Tibial artery (tissue), 4 donors: ENCODE measurements at regions of chr1 and their contacts with region 1.

Region 1: GRCh38 chr1:39317910-39318633 is 113.6 kb downstream of the MACF1 start:
- DNase-seq: no peak
- H3K4me3 ChIP-seq: no peak overlapping the region
- H3K27ac ChIP-seq: no peak overlapping the region
- H3K4me1 ChIP-seq: no peaks in the 10 kb centered on the region
- H3K27me3 ChIP-seq: no peaks in the 10 kb centered on the region
- CTCF ChIP-seq: no peak

Region 2: GRCh38 chr1:39081266-39082009 is 236.6 kb before region 1 on chr1:
- intact Hi-C with region 1: no loop called
- DNase-seq: no peak
- H3K4me3 ChIP-seq: peak overlapping the region; percentile 52 to 63
- H3K27ac ChIP-seq: peak overlapping the region in 1 of 2 donors; percentile 27
- H3K4me1 ChIP-seq: peaks cover 0 to 34% (median 25%) of the 10 kb centered on the region in 4 donors
- H3K27me3 ChIP-seq: peaks cover 0 to 12% of the 10 kb centered on the region in 2 donors
- CTCF ChIP-seq: peak in 1 of 2 experiments; percentile 5

Region 3: GRCh38 chr1:39258146-39258924 is 59.7 kb before region 1 on chr1:
- intact Hi-C with region 1: no loop called
- DNase-seq: peak; percentile 76 to 78
- H3K4me3 ChIP-seq: no peak overlapping the region
- H3K27ac ChIP-seq: peak overlapping the region; percentile 53 to 56
- H3K4me1 ChIP-seq: peaks cover 0 to 65% (median 14%) of the 10 kb centered on the region in 4 donors
- H3K27me3 ChIP-seq: no peaks in the 10 kb centered on the region
- CTCF ChIP-seq: peak; percentile 83 to 91

Region 4: DNA sequence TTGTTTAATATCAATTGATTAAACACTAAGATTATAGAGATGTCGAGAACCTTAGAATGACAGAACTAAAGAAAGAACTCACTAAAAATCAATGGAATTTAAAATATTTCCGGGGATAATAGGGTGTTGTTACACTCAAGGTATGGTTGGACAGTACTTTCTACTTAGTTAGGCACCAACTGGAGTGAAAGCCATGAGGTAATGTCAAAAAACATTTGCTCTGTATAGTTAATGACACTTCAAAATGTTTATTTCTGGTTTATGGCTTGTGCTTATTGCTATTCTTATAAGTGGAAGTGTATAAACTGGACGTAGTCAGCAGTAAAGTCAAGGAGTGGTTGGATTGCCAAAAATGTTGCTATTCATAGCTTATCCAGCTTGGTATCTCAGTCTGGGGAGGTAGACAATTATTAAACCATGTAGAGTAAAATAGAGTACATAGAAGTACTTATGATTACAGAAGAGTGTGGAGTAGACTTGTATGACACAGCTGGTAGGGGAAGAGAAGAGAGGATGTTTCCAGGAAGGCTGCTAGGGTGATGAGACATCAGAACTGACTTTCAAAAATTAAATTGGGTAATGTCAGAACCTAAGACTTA is 116.8 kb after region 1 on chr1:
- intact Hi-C with region 1: loop called (anchors 10 kb)
- DNase-seq: no peak
- H3K4me3 ChIP-seq: no peak overlapping the region
- H3K27ac ChIP-seq: no peak overlapping the region
- H3K4me1 ChIP-seq: peaks cover 0 to 7% (median 0%) of the 10 kb centered on the region in 4 donors
- H3K27me3 ChIP-seq: no peaks in the 10 kb centered on the region
- CTCF ChIP-seq: no peak

Region 5: DNA sequence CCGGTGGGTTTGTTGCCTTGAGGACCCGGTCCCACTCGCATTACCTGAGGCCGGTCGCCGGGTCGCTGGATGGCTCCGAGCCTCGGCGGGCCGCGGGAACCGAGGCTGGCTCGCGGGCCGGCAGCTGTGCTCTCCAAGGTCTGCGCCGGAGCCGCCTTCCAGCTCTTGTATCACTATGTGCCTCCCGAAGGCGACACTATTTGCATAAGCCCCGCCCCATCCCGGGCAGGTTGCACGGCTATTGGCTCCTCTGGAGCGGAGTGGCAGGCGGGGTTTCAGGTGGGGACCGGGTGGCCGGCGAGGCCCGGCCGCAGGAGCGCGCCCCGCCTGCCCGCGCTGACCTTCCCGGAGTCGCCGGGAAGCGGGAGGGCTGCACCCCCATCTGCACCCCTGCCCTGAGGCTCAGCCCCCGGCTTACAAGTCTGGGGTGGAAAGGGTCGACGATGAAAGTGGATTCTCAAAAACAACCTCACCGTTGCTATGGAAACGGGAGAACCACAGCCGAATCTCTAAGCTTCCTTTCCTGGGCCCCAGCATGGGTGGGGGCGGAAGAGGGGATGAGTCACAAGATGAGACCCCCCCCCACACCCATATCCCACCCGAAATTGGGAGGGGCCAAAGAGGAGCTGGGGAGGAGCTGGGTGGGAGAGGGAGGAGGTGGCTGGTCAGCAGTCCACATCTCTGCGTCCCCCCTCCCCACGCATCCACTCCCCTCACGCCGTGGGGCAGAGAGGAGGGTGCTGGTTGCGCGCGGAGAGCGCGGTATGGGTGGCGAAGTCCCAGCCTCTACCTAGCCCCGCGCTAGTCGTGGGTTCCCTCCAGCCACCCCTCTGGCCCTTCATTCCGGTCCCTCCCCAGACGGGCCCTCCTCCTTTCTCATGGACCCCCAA is 373.4 kb after region 1 on chr1 and contains the start of gene HPCAL4:
- intact Hi-C with region 1: no loop called
- DNase-seq: peak; percentile 80 to 88
- H3K4me3 ChIP-seq: peak within 1 kb of the TSS; percentile 34 to 50
- H3K27ac ChIP-seq: no peak within 1 kb of the TSS
- H3K4me1 ChIP-seq: peaks cover 0 to 24% (median 18%) of the 10 kb centered on the region in 4 donors
- H3K27me3 ChIP-seq: peaks cover 0 to 65% of the 10 kb centered on the region in 2 donors
- CTCF ChIP-seq: no peak